ENCODE measurements at regions of chr1 and their contacts with region 1.

Region 1: DNA sequence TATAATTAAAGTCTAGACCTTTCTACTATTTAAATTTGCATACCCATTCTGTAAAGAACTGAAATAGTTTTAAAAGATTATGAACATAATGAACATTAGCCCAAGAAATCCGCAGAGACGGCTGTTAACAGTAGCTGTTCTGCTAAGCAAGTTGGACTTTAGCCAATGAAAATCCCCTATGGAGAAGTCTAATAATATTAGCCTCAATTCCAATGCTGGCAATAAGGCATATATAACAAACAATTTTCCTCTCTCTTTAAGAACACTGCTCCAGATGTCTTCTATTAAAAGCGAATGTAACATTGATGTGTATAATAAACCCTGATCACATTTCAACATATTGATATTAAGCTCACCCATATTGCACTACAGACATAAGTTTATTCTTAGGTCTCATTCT is 221.3 kb upstream of the KCTD3 start:
- DNase-seq: no peak
- H3K4me3 Mint-ChIP-seq: no peak overlapping the region
- H3K27ac Mint-ChIP-seq: no peak overlapping the region
- H3K4me1 Mint-ChIP-seq: no peaks in the 10 kb centered on the region
- H3K27me3 Mint-ChIP-seq: no peaks in the 10 kb centered on the region
- CTCF ChIP-seq: no peak

Region 2: GRCh38 chr1:214573386-214574358 is 772.1 kb before region 1 on chr1:
- CTCF ChIA-PET with region 1: no interaction called
- intact Hi-C with region 1: loop called (anchors 5 kb)
- DNase-seq: peak; percentile 45
- H3K4me3 Mint-ChIP-seq: peak overlapping the region; percentile 22
- H3K27ac Mint-ChIP-seq: peak overlapping the region; percentile 66
- H3K4me1 Mint-ChIP-seq: peaks cover 56% of the 10 kb centered on the region
- H3K27me3 Mint-ChIP-seq: no peaks in the 10 kb centered on the region
- CTCF ChIP-seq: no peak

Region 3: GRCh38 chr1:215104283-215104682 is 241.5 kb before region 1 on chr1:
- CTCF ChIA-PET with region 1: no interaction called
- intact Hi-C with region 1: no loop called
- DNase-seq: no peak
- H3K4me3 Mint-ChIP-seq: no peak overlapping the region
- H3K27ac Mint-ChIP-seq: no peak overlapping the region
- H3K4me1 Mint-ChIP-seq: peaks cover 8% of the 10 kb centered on the region
- H3K27me3 Mint-ChIP-seq: no peaks in the 10 kb centered on the region
- CTCF ChIP-seq: no peak

Measured in Calu3 (cell line).